HEK293 (cell line): ENCODE measurements at regions of chr11 and their contacts with region 1.

Region 1: DNA sequence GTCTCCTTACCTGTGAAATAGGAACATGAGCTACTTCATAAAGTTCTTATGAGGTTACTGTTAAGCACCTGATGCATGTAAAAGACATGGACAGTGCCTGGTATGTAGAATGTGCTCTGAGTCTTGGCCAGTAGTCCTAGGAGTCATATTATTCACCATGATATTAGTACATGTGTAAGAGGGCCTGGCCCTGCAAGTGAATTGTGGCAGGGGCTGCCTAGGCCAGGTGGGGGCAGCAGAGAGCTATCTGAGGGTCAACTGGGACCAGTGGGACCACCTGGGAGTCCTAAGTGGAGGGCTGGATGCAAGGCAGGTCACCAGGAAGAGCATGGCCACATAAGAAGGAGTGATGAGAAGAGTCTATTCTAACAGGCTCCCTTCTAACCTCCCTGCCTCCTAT is 529.5 kb downstream of the SOX6 start:
- H3K4me3 ChIP-seq: no peak overlapping the region
- H3K27ac ChIP-seq: no peak overlapping the region
- H3K4me1 ChIP-seq: no peaks in the 10 kb centered on the region
- CTCF ChIP-seq: no peak

Region 2: GRCh38 chr11:15742626-15743519 is 84.0 kb before region 1 on chr11:
- CTCF ChIA-PET with region 1: no interaction called
- POLR2A ChIA-PET with region 1: no interaction called
- H3K4me3 ChIP-seq: no peak overlapping the region
- H3K27ac ChIP-seq: no peak overlapping the region; the same call in 1 of the 2 replicates
- H3K4me1 ChIP-seq: no peaks in the 10 kb centered on the region; the same call in 1 of the 2 replicates
- CTCF ChIP-seq: no peak

Region 3: GRCh38 chr11:15754221-15754620 is 72.6 kb before region 1 on chr11:
- CTCF ChIA-PET with region 1: no interaction called
- POLR2A ChIA-PET with region 1: no interaction called
- H3K4me3 ChIP-seq: no peak overlapping the region
- H3K27ac ChIP-seq: no peak overlapping the region
- H3K4me1 ChIP-seq: no peaks in the 10 kb centered on the region
- CTCF ChIP-seq: no peak

Region 4: DNA sequence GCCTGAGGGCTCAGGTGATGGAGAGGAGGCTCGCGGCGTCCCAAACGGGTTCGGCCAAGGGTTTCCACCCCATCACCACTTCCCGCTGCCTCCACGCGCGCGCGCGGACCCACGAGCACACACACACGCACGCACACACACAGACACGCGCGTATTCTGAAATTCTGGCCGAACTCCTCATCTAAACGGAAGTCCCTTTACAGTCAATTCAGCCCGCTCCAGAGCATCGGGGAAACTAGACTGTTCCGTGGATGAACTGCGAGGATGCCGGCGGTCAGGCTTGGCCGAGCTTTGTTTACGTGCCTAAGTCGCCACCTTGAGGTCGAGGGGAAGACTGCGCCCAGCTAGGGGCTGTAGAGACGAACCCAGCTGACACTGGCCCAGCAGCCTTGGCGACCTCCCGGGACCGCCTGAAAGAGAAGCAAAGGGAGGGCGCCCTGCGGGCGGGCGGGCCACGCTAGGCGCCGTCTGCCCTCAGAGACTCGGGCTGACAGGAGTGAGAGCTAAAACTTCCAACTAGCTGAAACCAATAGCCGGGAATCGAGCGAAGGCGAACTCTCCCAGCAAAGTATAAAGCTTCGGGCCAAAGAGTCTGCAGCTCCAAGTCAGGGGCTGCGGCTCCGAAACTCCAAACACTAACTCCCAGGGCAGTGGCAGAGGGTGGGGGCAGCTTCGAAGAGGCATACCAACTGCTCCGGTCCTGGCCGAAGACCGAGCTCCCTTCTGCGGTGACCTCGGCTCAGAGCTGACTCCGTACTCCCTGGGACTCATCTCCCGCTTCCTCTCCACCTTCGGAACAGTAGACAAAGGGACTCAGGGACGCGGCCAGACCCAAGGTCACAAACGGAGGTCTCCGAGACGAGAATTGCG is 786.9 kb after region 1 on chr11:
- CTCF ChIA-PET with region 1: interaction called, 11 read pairs
- POLR2A ChIA-PET with region 1: no interaction called
- H3K4me3 ChIP-seq: peak overlapping the region; percentile 54
- H3K27ac ChIP-seq: peak overlapping the region; percentile 25; the same call in 1 of the 2 replicates
- H3K4me1 ChIP-seq: no peaks in the 10 kb centered on the region
- CTCF ChIP-seq: peak; percentile 84